Activated CD8-positive, alpha-beta memory T cell treated with anti-CD3 and anti-CD28 coated beads, Interleukin-2, amount 10 ng/mL, durations not matched to agents 7 days and 5 days (primary cell): ENCODE measurements at regions of chr22 and their contacts with region 1.

Region 1: GRCh38 chr22:22959147-22959827 is 71.7 kb downstream of the IGLL5 start:
- DNase-seq: peak; percentile 78
- ATAC-seq: peak; percentile 60
- H3K4me3 Mint-ChIP-seq: no peak overlapping the region
- H3K27ac Mint-ChIP-seq: no peak overlapping the region
- H3K4me1 Mint-ChIP-seq: peaks cover 2% of the 10 kb centered on the region
- H3K27me3 Mint-ChIP-seq: peaks cover 48% of the 10 kb centered on the region

Region 2: DNA sequence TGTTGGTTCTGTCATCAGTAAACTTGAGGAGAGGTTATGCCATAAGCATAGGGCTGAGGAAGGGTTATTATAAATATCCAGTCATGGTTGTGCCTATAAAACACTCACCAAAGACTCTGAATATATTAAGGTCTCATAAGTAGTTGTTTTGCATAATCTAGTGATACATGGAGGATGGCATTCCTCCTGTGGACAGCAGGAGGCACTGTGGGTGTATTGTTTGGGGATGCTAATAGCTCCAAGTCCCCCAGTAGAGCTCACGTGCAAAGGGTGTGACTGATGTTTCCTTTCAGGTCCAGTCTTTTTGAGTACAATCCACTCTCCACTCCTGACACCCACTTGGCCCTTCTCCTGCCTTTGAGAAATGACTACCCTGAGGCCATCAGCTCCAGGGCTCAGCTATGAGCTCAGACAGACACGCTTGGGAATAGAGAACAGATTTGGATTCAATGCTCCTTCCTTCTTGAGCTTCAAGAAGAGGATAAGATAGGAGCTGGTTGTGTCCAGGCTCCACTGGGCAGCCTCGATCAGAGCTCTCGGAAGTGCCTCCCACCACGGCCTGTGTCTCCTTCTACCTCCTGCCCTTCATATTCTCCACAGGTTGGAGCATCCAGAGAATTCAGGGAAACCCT is 156.8 kb before region 1 on chr22:
- CTCF ChIA-PET with region 1: interaction called, 12 read pairs
- DNase-seq: peak; percentile 60
- ATAC-seq: peak; percentile 36
- H3K4me3 Mint-ChIP-seq: no peak overlapping the region
- H3K27ac Mint-ChIP-seq: no peak overlapping the region
- H3K4me1 Mint-ChIP-seq: peaks cover 4% of the 10 kb centered on the region
- H3K27me3 Mint-ChIP-seq: peaks cover 11% of the 10 kb centered on the region

Region 3: DNA sequence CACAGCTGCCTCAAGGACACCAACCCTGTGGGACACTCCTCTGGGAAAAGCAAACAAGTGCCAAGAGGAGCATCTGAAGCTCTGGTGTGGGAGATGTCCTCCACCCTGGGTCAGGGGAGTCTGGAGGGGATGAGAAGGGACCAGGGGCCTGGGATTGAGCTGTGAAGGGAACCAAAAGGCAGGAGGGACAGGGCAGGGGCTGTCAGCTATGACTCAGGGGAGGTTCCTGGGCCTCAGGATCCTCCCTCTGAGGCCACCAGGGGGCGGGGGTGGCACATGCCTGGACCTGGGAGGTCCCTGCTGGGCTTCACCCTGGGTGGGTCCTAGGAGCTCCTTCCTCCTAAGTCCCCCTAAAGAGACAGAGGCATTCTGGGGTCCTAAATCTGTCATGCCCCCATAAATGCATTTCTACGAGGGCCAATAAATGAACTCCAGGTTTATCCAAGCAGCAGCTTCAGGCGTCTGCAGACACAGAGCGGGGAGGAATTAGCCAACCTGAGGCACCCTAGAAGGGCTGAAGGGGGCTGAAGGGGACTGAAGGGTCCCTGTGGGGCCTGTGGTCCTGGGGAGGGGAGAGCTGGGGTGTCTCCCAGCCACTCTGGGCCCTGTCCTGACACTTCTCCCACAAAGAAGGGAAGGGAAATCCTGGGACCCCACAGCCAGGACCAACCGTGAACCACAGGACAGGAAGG is 103.5 kb before region 1 on chr22:
- CTCF ChIA-PET with region 1: interaction called, 50 read pairs
- DNase-seq: peak; percentile 64
- ATAC-seq: peak; percentile 86
- H3K4me3 Mint-ChIP-seq: no peak overlapping the region
- H3K27ac Mint-ChIP-seq: no peak overlapping the region
- H3K4me1 Mint-ChIP-seq: no peaks in the 10 kb centered on the region
- H3K27me3 Mint-ChIP-seq: peaks cover 33% of the 10 kb centered on the region

Region 4: GRCh38 chr22:23119494-23120414 is 160.5 kb after region 1 on chr22:
- CTCF ChIA-PET with region 1: interaction called, 11 read pairs
- DNase-seq: peak; percentile 60
- ATAC-seq: peak; percentile 78
- H3K4me3 Mint-ChIP-seq: no peak overlapping the region
- H3K27ac Mint-ChIP-seq: peak overlapping the region; percentile 75
- H3K4me1 Mint-ChIP-seq: peaks cover 9% of the 10 kb centered on the region
- H3K27me3 Mint-ChIP-seq: no peaks in the 10 kb centered on the region

Region 5: DNA sequence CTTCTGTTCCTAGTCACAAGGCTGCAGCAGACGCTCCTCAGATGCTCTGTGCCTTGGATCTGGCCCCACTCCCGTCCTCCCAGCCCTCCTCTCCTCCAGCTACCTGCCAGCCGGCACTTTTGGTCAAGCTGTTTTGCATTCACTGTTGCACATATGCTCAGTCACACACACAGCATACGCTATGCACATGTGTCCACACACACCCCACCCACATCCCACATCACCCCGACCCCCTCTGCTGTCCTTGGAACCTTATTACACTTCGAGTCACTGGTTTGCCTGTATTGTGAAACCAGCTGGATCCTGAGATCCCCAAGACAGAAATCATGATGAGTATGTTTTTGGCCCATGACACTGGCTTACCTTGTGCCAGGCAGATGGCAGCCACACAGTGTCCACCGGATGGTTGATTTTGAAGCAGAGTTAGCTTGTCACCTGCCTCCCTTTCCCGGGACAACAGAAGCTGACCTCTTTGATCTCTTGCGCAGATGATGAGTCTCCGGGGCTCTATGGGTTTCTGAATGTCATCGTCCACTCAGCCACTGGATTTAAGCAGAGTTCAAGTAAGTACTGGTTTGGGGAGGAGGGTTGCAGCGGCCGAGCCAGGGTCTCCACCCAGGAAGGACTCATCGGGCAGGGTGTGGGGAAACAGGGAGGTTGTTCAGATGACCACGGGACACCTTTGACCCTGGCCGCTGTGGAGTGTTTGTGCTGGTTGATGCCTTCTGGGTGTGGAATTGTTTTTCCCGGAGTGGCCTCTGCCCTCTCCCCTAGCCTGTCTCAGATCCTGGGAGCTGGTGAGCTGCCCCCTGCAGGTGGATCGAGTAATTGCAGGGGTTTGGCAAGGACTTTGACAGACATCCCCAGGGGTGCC is 330.8 kb after region 1 on chr22:
- CTCF ChIA-PET with region 1: interaction called, 11 read pairs
- DNase-seq: peak; percentile 63
- ATAC-seq: peak; percentile 46
- H3K4me3 Mint-ChIP-seq: no peak overlapping the region
- H3K27ac Mint-ChIP-seq: no peak overlapping the region
- H3K4me1 Mint-ChIP-seq: no peaks in the 10 kb centered on the region
- H3K27me3 Mint-ChIP-seq: no peaks in the 10 kb centered on the region